ENCODE measurements at regions of chr17 and their contacts with region 1.

Region 1: GRCh38 chr17:52202164-52203080 is 43.9 kb upstream of the CA10 start:
- DNase-seq: no peak
- ATAC-seq: no peak
- H3K4me3 Mint-ChIP-seq: no peak overlapping the region
- H3K27ac Mint-ChIP-seq: no peak overlapping the region
- H3K4me1 Mint-ChIP-seq: no peaks in the 10 kb centered on the region
- H3K27me3 Mint-ChIP-seq: peaks cover 5% of the 10 kb centered on the region

Region 2: DNA sequence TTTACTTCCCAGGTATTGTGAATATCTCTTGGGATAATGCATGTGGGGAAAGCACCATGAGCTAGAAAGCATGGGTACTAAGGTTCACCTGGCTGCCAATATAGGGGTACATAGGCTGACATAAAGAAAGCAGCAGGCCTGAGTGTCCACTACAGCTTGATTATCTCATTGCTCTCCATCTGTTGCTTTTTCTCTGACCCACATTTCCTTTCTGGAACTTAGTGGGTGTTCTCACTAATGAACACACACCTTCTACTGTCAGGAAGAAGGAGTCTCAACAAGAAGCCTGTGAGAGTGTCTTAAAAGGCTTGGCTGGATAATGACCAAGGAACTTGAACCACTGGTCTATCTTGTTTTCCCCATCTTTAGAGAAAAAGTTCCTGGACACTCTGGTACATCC is 106.4 kb before region 1 on chr17:
- CTCF ChIA-PET with region 1: no interaction called
- POLR2A ChIA-PET with region 1: no interaction called
- intact Hi-C with region 1: no loop called
- DNase-seq: no peak
- ATAC-seq: no peak
- H3K4me3 Mint-ChIP-seq: no peak overlapping the region
- H3K27ac Mint-ChIP-seq: no peak overlapping the region
- H3K4me1 Mint-ChIP-seq: no peaks in the 10 kb centered on the region
- H3K27me3 Mint-ChIP-seq: peaks cover 6% of the 10 kb centered on the region

Region 3: GRCh38 chr17:52147872-52148271 is 54.5 kb before region 1 on chr17:
- CTCF ChIA-PET with region 1: no interaction called
- POLR2A ChIA-PET with region 1: no interaction called
- intact Hi-C with region 1: loop called in 1 of 2 experiments (anchors 10 kb)
- DNase-seq: no peak
- ATAC-seq: peak; percentile 73
- H3K4me3 Mint-ChIP-seq: no peak overlapping the region
- H3K27ac Mint-ChIP-seq: peak overlapping the region; percentile 72
- H3K4me1 Mint-ChIP-seq: peaks cover 14% of the 10 kb centered on the region
- H3K27me3 Mint-ChIP-seq: no peaks in the 10 kb centered on the region

Region 4: GRCh38 chr17:52181782-52182181 is 20.6 kb before region 1 on chr17:
- CTCF ChIA-PET with region 1: no interaction called
- POLR2A ChIA-PET with region 1: no interaction called
- intact Hi-C with region 1: no loop called
- DNase-seq: no peak
- ATAC-seq: no peak
- H3K4me3 Mint-ChIP-seq: no peak overlapping the region
- H3K27ac Mint-ChIP-seq: no peak overlapping the region
- H3K4me1 Mint-ChIP-seq: no peaks in the 10 kb centered on the region
- H3K27me3 Mint-ChIP-seq: peaks cover 2% of the 10 kb centered on the region

Region 5: DNA sequence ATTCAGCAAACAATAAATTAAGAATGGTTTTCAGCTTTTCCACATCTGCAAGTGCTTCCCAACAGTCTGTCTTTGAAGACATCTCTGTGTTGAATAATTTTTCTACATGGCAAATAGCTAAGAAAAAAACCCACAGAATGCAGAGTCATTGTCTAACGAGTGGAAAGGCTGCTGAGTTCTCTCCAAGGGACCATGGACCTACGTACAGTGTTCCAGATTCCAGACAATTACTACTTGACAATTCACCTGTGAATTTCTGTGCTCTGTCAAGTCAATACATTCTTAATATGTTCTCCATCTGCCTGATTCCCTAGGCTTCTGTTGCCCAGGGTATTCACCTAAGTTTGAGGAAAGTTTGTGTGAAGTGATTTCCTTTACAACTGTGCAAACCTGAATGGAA is 39.8 kb after region 1 on chr17:
- CTCF ChIA-PET with region 1: no interaction called
- POLR2A ChIA-PET with region 1: no interaction called
- intact Hi-C with region 1: no loop called
- DNase-seq: no peak
- ATAC-seq: no peak
- H3K4me3 Mint-ChIP-seq: no peak overlapping the region
- H3K27ac Mint-ChIP-seq: no peak overlapping the region
- H3K4me1 Mint-ChIP-seq: no peaks in the 10 kb centered on the region
- H3K27me3 Mint-ChIP-seq: no peaks in the 10 kb centered on the region